ENCODE measurements at regions of chr3 and their contacts with region 1.

Region 1: DNA sequence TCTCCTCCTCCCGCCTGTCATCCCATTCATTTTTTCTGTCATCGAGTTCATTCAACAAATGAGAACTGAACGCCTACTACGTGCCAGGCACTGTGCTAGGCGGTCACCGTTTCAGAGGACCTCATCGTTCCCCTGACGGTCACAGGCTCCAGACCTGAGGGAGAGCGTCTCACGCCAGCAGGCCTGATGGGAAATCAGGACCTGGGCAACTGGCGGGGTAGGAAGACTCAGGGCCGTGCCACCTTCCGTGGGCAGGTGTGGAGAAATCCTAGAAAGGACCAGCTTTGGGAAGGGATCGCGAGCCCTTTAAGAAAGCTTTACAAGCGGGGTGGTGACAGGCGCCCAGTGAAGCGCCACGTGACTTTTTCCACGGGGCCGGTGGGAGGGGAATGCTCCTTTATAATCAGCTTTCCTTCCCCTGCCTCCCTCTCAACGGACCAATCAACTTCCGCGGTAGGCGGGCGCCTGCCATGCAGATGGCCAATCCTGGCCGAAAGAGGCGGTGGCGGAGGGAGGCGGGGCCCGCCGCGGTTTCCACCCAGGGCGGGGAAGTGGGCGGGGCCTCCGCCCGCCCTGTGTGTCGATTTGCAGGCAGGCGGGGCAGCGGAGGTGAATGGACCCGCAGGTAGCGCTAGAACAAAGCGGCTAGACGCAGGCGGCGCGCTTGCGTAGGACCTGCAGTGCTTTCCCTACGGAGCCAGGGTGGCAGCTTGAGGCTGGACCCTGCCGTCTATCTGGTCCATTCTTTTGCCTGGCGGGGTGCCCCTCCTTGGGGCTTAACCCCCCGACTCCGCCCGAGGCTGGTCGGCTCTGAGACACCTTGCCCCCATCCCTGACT is 816 bp upstream of the DUSP7 start:
- DNase-seq: peak; percentile 100
- H3K4me3 ChIP-seq: peak overlapping the region; percentile 70 to 75
- H3K27ac ChIP-seq: peak overlapping the region; percentile 86 to 87
- H3K4me1 ChIP-seq: peaks cover 25% of the 10 kb centered on the region
- H3K27me3 ChIP-seq: no peaks in the 10 kb centered on the region
- CTCF ChIP-seq: no peak
- POLR2A ChIP-seq: no peak

Region 2: GRCh38 chr3:51974963-51975851 is 82.0 kb before region 1 on chr3 and contains the start of gene ABHD14A:
- intact Hi-C with region 1: no loop called
- DNase-seq: peak; percentile 78
- H3K4me3 ChIP-seq: peak within 1 kb of the TSS; percentile 76 to 84
- H3K27ac ChIP-seq: peak within 1 kb of the TSS; percentile 85 to 89
- H3K4me1 ChIP-seq: peaks cover 8% of the 10 kb centered on the region
- H3K27me3 ChIP-seq: no peaks in the 10 kb centered on the region
- CTCF ChIP-seq: no peak
- POLR2A ChIP-seq: peak; percentile 14
- total RNA-seq, gene ABHD14A: 38.9 to 51.6 TPM

Region 3: GRCh38 chr3:52001443-52001974 is 55.7 kb before region 1 on chr3:
- intact Hi-C with region 1: loop called (anchors 10 kb)
- DNase-seq: peak; percentile 81
- H3K4me3 ChIP-seq: no peak overlapping the region
- H3K27ac ChIP-seq: no peak overlapping the region
- H3K4me1 ChIP-seq: peaks cover 25% of the 10 kb centered on the region
- H3K27me3 ChIP-seq: no peaks in the 10 kb centered on the region
- CTCF ChIP-seq: peak; percentile 82 to 96 (median 88)
- POLR2A ChIP-seq: no peak

Region 4: DNA sequence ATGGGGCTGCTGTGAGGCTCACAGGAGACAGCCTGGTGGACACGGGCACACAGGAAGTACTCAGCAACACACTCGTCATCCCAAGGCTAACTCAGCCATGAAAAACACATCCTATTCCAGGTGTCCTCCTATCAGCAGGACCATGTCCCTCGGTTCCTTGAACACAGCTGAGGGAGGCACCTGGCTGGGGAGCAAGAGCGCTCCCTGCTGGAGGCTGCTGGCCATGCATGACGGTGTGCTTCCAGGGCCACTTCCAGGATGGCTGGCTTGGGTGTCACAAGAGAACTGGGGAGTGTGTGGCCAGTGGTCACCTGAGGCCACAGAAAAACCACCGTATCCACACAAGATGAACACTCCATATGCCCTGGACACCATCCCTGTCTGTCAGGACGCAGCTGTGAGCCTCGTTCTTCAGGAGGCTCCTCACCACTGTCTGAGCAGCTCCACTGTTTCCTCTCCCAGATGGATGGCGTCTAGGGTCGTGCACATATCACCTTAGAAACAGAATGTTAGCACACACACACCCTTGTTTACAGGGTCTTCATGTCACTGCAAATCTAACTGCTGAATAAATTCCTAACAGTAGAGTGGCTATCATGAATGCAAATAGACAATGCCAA is 66.0 kb after region 1 on chr3:
- intact Hi-C with region 1: loop called (anchors 5 kb)
- DNase-seq: peak; percentile 83
- H3K4me3 ChIP-seq: no peak overlapping the region
- H3K27ac ChIP-seq: peak overlapping the region in 1 of 2 donors; percentile 38
- H3K4me1 ChIP-seq: peaks cover 27% of the 10 kb centered on the region
- H3K27me3 ChIP-seq: no peaks in the 10 kb centered on the region
- CTCF ChIP-seq: peak; percentile 78 to 90 (median 87)
- POLR2A ChIP-seq: no peak

Measured in testis (tissue), 5 donors.